GM10248 (cell line): ENCODE measurements at regions of chr10 and their contacts with region 1.

Region 1: GRCh38 chr10:79929409-79929904 is 19.4 kb downstream of the SFTPD start:
- DNase-seq: peak; percentile 75
- CTCF ChIP-seq: peak; percentile 84

Region 2: GRCh38 chr10:79562135-79562756 is 367.2 kb before region 1 on chr10:
- CTCF ChIA-PET with region 1: interaction called, 14 read pairs
- POLR2A ChIA-PET with region 1: no interaction called
- DNase-seq: peak; percentile 62
- CTCF ChIP-seq: peak; percentile 90

Region 3: DNA sequence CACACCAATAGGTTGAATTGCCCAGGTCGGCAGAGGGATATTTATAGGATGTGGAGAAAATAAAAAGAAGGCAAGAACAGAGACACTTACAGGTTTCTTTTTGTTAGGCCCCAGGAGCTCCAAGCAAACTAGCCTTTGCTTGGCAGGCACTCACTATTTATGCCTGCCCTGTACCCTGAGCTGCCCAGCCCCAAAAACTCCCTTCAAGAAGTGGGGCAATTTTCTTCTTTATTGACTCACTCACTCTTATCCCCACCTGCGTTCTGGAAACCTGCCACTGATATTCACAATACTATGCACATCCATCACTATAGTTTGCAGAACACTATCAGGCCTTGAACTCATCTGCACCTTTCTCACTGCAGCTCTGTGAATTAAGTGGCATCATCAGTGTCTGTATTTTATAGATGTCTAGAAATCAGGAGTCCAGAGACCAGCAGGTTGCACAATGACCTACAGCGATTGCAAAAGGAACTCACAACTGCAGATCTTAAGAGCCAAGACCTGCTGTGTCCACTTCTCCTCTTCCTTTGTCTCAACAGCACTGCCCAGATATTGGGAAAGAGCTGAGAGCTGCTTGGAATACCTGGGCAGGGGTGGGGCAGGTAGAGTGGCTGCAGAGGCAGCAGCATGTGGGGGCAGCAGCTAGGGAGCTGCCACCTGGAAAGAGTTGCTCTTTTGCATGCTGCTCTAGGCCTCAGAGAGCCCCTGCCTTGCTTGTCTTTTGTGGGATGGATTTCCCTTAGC is 19.7 kb after region 1 on chr10 and contains the start of gene SFTPD:
- CTCF ChIA-PET with region 1: interaction called, 10 read pairs
- POLR2A ChIA-PET with region 1: no interaction called
- DNase-seq: no peak
- CTCF ChIP-seq: no peak

Region 4: DNA sequence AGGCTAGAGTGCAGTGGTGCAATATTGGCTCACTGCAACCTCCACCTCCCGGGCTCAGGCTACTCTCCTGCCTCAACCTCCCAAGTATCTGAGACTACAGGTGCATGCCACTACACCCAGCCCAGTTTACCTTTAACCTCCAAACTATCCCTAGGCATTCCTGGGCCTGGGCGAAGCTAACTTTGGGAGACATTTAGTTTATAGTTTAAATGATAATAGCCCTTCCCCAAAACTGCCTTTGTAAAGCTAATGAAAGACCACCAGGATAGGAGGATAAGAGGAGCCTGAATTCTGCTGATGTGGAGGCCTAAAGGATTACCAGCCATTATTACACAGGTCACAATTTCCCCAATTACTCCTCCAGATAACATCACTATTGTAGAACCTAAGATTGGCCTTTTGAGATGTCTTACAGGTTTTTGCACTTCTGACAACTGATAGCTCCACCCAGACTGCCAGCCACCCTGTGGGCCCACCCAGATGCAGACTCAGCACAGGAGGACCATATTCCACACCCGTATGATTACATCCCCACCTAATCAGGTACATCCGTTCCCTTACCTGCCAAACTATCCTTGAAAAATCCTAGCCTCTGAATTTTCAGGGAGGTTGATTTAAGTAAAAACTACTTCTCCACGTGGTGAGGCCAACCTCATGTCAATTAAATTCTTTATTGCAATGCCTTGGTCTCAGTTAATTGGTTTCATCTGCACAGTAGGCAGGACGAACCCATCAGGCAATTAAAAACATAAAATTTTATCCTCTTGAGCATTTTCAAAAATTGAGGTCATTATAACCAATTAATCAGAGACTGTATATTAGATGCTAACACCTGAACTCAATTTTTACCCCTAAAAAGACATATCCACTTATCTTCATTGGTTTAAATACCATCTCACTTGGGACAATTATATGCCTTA is 86.7 kb after region 1 on chr10:
- CTCF ChIA-PET with region 1: no interaction called
- POLR2A ChIA-PET with region 1: no interaction called
- DNase-seq: no peak
- CTCF ChIP-seq: no peak

Region 5: DNA sequence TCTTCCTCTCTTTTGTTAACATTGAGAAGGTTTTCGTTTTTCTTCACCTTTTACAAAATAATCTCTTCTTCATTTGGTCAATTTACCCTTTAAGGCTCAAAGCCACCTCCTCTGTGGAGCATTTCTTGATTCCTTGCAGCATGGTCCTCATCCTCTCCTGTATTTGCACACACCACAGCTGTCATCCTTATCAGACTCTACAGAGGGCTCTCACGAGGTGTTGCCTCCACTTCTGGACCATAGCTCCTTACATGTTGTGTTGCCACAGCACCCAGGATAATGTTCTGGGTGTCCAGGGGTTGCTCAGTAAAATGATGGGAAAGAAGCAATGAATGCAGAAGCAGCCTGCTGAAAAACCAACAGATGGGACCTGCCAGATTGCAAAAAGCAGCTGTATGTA is 801.1 kb after region 1 on chr10:
- CTCF ChIA-PET with region 1: no interaction called
- POLR2A ChIA-PET with region 1: no interaction called
- DNase-seq: no peak
- CTCF ChIP-seq: no peak